CD4-positive, alpha-beta T cell (primary cell): ENCODE measurements at regions of chr12 and their contacts with region 1.

Region 1: DNA sequence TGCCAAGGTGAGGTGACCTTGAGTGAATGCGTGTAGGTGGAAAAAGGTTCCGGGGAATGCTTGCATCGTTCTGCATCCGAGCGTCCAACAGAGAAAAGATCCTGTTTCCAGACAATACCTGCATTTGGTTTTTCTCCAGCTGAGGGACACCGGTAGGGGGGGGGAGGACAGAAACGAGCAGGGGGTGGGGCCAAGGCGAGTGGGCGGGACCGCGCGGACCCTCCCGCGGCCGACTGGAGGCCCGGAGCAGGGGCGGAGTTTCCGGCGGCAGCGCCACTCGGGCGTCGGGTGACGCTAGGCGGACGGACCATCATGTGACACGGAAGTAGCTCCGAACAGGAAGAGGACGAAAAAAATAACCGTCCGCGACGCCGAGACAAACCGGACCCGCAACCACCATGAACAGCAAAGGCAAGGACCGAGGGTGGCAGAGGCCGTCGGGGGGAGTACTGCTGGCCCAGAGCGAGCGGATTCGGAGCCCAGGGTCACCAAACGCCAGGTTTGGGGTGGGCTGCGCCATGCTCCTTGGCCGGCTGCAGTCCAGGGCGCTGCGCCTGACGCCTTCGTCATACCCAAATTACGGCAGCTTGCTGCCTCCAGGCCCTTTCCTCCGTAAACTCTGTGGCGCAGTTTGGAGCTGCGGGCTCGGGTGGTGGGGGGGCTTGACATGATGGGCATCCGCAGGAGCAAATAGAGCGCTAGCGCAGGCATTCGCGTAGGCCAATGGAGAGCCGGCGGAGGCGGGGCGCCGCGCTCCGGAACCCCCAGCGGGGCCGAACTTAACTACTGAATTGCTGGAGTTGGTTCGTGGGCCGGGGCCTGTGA is at the start of gene DAZAP2:
- DNase-seq: peak; percentile 90 to 98 (median 95)
- ATAC-seq: peak; percentile 86
- H3K4me3 ChIP-seq: peak within 1 kb of the TSS; percentile 99
- H3K4me3 Mint-ChIP-seq: peak within 1 kb of the TSS; percentile 96
- H3K27ac ChIP-seq: peak within 1 kb of the TSS; percentile 100
- H3K27ac Mint-ChIP-seq: peak within 1 kb of the TSS; percentile 97
- H3K4me1 ChIP-seq: peaks cover 36% of the 10 kb centered on the region
- H3K4me1 Mint-ChIP-seq: peaks cover 61% of the 10 kb centered on the region
- H3K27me3 ChIP-seq: no peaks in the 10 kb centered on the region
- H3K27me3 Mint-ChIP-seq: no peaks in the 10 kb centered on the region
- CTCF ChIP-seq: peak; percentile 20
- total RNA-seq, gene DAZAP2: 292 to 310 TPM

Region 2: DNA sequence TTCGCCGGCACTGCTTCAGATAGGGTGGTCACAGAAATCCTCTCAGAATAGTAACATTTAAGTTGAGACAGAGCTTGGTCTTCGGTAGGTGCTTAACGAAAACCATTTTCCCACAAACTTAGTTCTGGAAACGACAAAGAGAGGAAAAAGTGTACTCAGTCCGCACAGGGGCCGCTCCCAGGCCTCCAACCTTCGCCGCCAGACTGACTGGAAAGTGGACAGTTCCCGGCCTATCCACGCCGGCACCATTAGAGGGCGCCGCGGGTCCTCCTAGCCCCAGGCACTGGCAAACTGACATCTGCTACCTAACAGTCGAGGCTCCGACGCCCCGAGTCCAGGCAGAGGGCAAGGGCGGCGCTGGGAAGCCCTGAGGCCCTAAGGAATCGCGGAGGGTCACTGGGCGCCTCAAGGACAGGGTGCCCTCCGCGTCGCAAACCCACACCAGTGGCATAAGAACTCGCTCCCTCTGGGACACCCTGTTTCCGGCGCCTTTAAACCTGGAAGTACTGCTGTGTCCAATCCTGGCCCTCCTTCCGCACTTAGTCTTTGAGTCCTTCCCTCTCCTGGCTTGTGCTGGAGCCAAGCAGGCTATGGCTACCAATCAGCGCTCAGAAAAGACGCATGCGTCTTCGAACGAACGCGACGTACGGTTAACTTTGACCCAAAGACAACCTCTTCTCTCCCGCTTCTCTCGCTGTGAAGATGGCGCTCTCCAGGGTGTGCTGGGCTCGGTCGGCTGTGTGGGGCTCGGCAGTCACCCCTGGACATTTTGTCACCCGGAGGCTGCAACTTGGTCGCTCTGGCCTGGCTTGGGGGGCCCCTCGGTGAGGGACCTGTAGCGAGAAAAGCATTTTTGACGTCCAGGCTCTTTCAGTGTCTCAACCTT is 190.8 kb before region 1 on chr12 and contains the start of gene LETMD1:
- CTCF ChIA-PET with region 1: interaction called, 4 read pairs
- POLR2A ChIA-PET with region 1: no interaction called
- intact Hi-C with region 1: loop called (anchors 2 kb)
- DNase-seq: peak; percentile 79 to 98 (median 87)
- ATAC-seq: peak; percentile 95
- H3K4me3 ChIP-seq: peak within 1 kb of the TSS; percentile 91
- H3K4me3 Mint-ChIP-seq: peak within 1 kb of the TSS; percentile 93
- H3K27ac ChIP-seq: peak within 1 kb of the TSS; percentile 83 to 94
- H3K27ac Mint-ChIP-seq: peak within 1 kb of the TSS; percentile 93
- H3K4me1 ChIP-seq: peaks cover 25% of the 10 kb centered on the region
- H3K4me1 Mint-ChIP-seq: peaks cover 39% of the 10 kb centered on the region
- H3K27me3 ChIP-seq: no peaks in the 10 kb centered on the region
- H3K27me3 Mint-ChIP-seq: no peaks in the 10 kb centered on the region
- CTCF ChIP-seq: peak; percentile 94
- total RNA-seq, gene LETMD1: 51.8 to 54.1 TPM

Region 3: DNA sequence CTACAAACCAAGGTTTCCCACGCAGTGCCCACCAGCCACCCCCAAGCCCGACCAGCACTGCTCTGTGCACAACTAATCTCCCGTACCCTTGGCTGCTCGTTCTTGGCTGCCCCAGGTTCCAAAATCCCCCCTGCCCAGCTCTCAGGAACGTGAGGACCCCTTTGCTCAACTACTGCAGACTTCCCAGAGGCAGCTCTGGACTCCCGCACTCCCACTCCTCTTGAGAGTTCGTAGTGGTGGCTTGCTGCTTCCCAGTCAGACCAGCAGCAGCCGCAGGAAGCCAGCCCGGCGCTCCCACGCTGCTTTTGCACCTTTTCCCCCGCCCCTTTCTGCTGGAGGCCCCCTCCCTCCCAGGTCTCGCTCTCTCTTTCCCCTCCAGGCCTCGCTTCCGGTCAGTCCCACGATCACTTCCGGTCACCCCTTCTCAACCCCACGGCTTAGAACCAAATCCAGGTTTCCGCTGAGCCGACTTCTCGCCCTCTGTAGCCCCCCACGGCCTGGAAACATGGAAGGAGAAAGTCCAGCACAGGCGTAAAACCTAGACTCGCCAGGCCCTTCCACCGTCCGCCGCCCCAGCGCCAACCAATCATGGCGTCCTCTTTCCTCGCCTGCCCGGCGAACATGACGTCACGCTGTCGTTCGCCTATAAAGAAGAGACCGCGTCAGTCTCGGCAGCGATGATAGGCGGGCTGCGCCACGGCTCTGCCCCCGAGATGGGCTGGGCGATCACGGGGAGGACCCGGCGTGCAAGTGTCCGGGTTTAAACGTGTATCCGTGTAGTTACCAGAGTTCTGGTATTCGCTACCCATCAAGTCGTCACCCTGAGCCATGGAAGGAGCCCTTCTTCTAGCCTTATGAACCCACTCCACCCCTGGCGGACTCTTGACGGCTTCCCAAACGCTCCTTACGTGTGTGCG is 65.9 kb before region 1 on chr12 and contains the start of gene TFCP2:
- CTCF ChIA-PET with region 1: no interaction called
- POLR2A ChIA-PET with region 1: interaction called, 6 read pairs
- intact Hi-C with region 1: loop called (anchors 2 kb)
- DNase-seq: peak; percentile 85 to 98 (median 90)
- ATAC-seq: peak; percentile 98
- H3K4me3 ChIP-seq: peak within 1 kb of the TSS; percentile 91
- H3K4me3 Mint-ChIP-seq: peak within 1 kb of the TSS; percentile 87
- H3K27ac ChIP-seq: peak within 1 kb of the TSS; percentile 91 to 96
- H3K27ac Mint-ChIP-seq: no peak within 1 kb of the TSS
- H3K4me1 ChIP-seq: peaks cover 34% of the 10 kb centered on the region
- H3K4me1 Mint-ChIP-seq: peaks cover 18% of the 10 kb centered on the region
- H3K27me3 ChIP-seq: no peaks in the 10 kb centered on the region
- H3K27me3 Mint-ChIP-seq: no peaks in the 10 kb centered on the region
- CTCF ChIP-seq: no peak
- total RNA-seq, gene TFCP2: 9.4 to 11.7 TPM

Region 4: GRCh38 chr12:51254592-51254991 is 15.9 kb after region 1 on chr12:
- CTCF ChIA-PET with region 1: interaction called, 3 read pairs
- POLR2A ChIA-PET with region 1: interaction called, 29 read pairs
- intact Hi-C with region 1: no loop called
- DNase-seq: no peak
- ATAC-seq: no peak
- H3K4me3 ChIP-seq: no peak overlapping the region
- H3K4me3 Mint-ChIP-seq: no peak overlapping the region
- H3K27ac ChIP-seq: no peak overlapping the region
- H3K27ac Mint-ChIP-seq: no peak overlapping the region
- H3K4me1 ChIP-seq: peaks cover 2% of the 10 kb centered on the region
- H3K4me1 Mint-ChIP-seq: peaks cover 4% of the 10 kb centered on the region
- H3K27me3 ChIP-seq: no peaks in the 10 kb centered on the region
- H3K27me3 Mint-ChIP-seq: no peaks in the 10 kb centered on the region
- CTCF ChIP-seq: no peak

Region 5: GRCh38 chr12:51326762-51327439 is 88.2 kb after region 1 on chr12:
- CTCF ChIA-PET with region 1: no interaction called
- POLR2A ChIA-PET with region 1: interaction called, 17 read pairs
- intact Hi-C with region 1: no loop called
- DNase-seq: peak in 4 of 14 experiments; percentile 12 to 67 (median 42)
- ATAC-seq: no peak
- H3K4me3 ChIP-seq: no peak overlapping the region
- H3K4me3 Mint-ChIP-seq: peak overlapping the region; percentile 62
- H3K27ac ChIP-seq: peak overlapping the region; percentile 25 to 48
- H3K27ac Mint-ChIP-seq: peak overlapping the region; percentile 87
- H3K4me1 ChIP-seq: peaks cover 73% of the 10 kb centered on the region
- H3K4me1 Mint-ChIP-seq: peaks cover 79% of the 10 kb centered on the region
- H3K27me3 ChIP-seq: no peaks in the 10 kb centered on the region
- H3K27me3 Mint-ChIP-seq: no peaks in the 10 kb centered on the region
- CTCF ChIP-seq: no peak